ENCODE measurements at regions of chr4 and their contacts with region 1.

Region 1: DNA sequence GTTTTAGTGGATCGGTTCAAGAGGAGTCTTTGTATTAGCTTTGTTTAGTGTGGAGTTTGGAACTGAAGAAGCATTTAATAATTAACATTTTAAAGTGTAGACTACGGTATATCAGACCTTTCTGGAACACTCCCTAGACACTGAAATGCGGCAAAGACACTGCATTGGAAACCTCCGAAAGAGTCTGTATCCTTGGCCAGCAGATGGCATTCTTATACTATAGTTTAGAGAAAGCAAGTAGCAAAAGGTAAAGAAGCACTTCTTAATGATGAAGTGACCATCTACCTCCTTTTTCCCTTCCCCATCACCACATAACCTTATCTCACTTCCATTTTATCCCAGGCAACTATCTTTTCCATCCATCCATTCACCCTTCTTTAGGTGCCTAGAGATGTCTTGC is 7.6 kb downstream of the FABP2 start:
- DNase-seq: peak in 10 of 14 experiments; percentile 2 to 70 (median 8)
- ATAC-seq: peak; percentile 85
- H3K4me3 ChIP-seq: no peak overlapping the region
- H3K4me3 Mint-ChIP-seq: no peak overlapping the region
- H3K27ac ChIP-seq: no peak overlapping the region
- H3K27ac Mint-ChIP-seq: no peak overlapping the region
- H3K4me1 ChIP-seq: no peaks in the 10 kb centered on the region
- H3K4me1 Mint-ChIP-seq: no peaks in the 10 kb centered on the region
- H3K27me3 ChIP-seq: peaks cover 0 to 2% of the 10 kb centered on the region in 2 experiments
- H3K27me3 Mint-ChIP-seq: peaks cover 16% of the 10 kb centered on the region
- CTCF ChIP-seq: peak; percentile 69

Region 2: DNA sequence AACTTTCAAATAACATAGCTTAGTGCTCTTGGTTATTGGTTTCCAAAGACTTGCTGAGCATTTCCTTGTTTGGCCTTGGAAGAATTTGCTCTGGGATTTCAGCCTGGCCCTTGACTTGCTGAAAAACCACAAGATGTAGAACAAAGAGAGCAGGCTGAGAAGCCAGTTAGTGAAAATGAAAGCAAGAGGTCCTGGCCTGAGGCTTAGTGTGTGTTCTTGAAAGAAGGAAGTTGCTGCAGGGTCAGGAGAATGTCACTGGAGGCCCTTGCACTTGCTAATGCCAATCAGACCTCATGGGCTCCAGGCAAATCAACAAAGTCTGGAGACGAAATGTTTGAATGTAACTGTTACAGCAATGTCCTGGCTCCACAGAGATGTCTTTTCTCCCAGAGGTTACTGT is 346.4 kb before region 1 on chr4:
- CTCF ChIA-PET with region 1: no interaction called
- POLR2A ChIA-PET with region 1: no interaction called
- intact Hi-C with region 1: no loop called
- DNase-seq: peak in 3 of 14 experiments; percentile 29 to 39 (median 36)
- ATAC-seq: no peak
- H3K4me3 ChIP-seq: no peak overlapping the region
- H3K4me3 Mint-ChIP-seq: no peak overlapping the region
- H3K27ac ChIP-seq: no peak overlapping the region
- H3K27ac Mint-ChIP-seq: no peak overlapping the region
- H3K4me1 ChIP-seq: peaks cover 6% of the 10 kb centered on the region
- H3K4me1 Mint-ChIP-seq: peaks cover 6% of the 10 kb centered on the region
- H3K27me3 ChIP-seq: no peaks in the 10 kb centered on the region
- H3K27me3 Mint-ChIP-seq: no peaks in the 10 kb centered on the region
- CTCF ChIP-seq: no peak

Region 3: DNA sequence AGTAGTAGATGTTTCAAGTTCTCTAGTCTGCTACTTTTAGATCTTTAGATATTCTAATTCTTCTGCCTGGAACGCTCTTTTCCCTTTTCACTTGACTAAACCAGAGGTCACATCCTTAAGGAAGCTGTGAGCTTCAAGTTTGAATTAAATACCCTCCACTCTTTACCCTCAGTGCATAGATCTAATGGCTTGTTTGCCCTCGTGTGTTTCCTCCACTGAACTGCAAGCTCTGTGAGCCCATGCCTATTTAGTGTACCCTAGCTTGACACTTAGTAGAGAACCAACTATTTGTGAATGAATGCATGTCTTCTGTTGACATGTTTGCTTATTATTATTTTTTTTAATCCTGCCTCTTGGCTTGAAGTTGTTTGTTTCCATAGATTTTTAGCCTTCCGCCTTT is 176.0 kb after region 1 on chr4:
- CTCF ChIA-PET with region 1: no interaction called
- POLR2A ChIA-PET with region 1: no interaction called
- intact Hi-C with region 1: loop called in 1 of 2 experiments (anchors 1 kb)
- DNase-seq: peak in 1 of 14 experiments; percentile 7
- ATAC-seq: no peak
- H3K4me3 ChIP-seq: no peak overlapping the region
- H3K4me3 Mint-ChIP-seq: no peak overlapping the region
- H3K27ac ChIP-seq: no peak overlapping the region
- H3K27ac Mint-ChIP-seq: no peak overlapping the region
- H3K4me1 ChIP-seq: no peaks in the 10 kb centered on the region
- H3K4me1 Mint-ChIP-seq: no peaks in the 10 kb centered on the region
- H3K27me3 ChIP-seq: no peaks in the 10 kb centered on the region
- H3K27me3 Mint-ChIP-seq: no peaks in the 10 kb centered on the region
- CTCF ChIP-seq: no peak

Region 4: GRCh38 chr4:119628308-119629141 is 314.2 kb after region 1 on chr4 and contains the start of gene PDE5A:
- CTCF ChIA-PET with region 1: no interaction called
- POLR2A ChIA-PET with region 1: no interaction called
- intact Hi-C with region 1: loop called (anchors 1 to 2 kb)
- DNase-seq: peak; percentile 54 to 87 (median 71)
- ATAC-seq: peak; percentile 83
- H3K4me3 ChIP-seq: peak within 1 kb of the TSS; percentile 64
- H3K4me3 Mint-ChIP-seq: peak within 1 kb of the TSS; percentile 94
- H3K27ac ChIP-seq: peak within 1 kb of the TSS in 1 of 2 donors; percentile 41
- H3K27ac Mint-ChIP-seq: peak within 1 kb of the TSS; percentile 75
- H3K4me1 ChIP-seq: peaks cover 23% of the 10 kb centered on the region
- H3K4me1 Mint-ChIP-seq: peaks cover 28% of the 10 kb centered on the region
- H3K27me3 ChIP-seq: peaks cover 5 to 6% of the 10 kb centered on the region in 2 experiments
- H3K27me3 Mint-ChIP-seq: peaks cover 32% of the 10 kb centered on the region
- CTCF ChIP-seq: peak; percentile 74
- total RNA-seq, gene PDE5A: 0.11 to 0.56 TPM

Measured in CD4-positive, alpha-beta T cell (primary cell).